HEK293T (cell line): ENCODE measurements at regions of chr19 and their contacts with region 1.

Region 1: GRCh38 chr19:14136509-14137281 is at the start of gene ASF1B:
- DNase-seq: peak; percentile 92

Region 2: GRCh38 chr19:14061756-14062562 is 74.7 kb before region 1 on chr19 and contains the start of gene PALM3:
- CTCF ChIA-PET with region 1: no interaction called
- POLR2A ChIA-PET with region 1: no interaction called
- DNase-seq: no peak

Region 3: GRCh38 chr19:14073261-14073924 is 63.3 kb before region 1 on chr19:
- CTCF ChIA-PET with region 1: interaction called, 3 read pairs
- POLR2A ChIA-PET with region 1: interaction called, 15 read pairs
- DNase-seq: peak; percentile 79

Region 4: DNA sequence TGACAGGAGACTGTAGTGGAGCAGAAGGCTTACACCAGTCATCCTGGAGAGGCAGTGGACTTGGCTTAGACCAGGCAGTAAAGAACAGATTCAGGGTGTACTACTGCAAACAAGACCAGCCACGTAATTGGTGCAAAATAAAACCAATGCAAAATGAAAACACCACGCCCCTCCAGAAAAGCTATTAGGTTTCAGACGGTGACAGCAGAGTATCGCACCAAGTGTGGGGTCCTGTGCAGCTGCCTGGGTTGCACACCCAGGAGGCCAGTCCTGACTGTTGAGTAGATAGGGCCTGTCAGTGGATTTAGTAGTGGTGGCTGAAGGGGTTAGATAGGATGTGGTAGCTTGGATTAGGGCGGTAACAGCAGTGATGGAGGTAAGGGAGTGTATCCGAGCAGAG is 13.8 kb before region 1 on chr19:
- CTCF ChIA-PET with region 1: interaction called, 5 read pairs
- POLR2A ChIA-PET with region 1: interaction called, 13 read pairs
- DNase-seq: no peak

Region 5: GRCh38 chr19:14147797-14148605 is 11.3 kb after region 1 on chr19:
- CTCF ChIA-PET with region 1: interaction called, 10 read pairs
- POLR2A ChIA-PET with region 1: interaction called, 18 read pairs
- DNase-seq: peak; percentile 74

Region 6: GRCh38 chr19:14347999-14348889 is 211.5 kb after region 1 on chr19:
- CTCF ChIA-PET with region 1: interaction called, 7 read pairs
- POLR2A ChIA-PET with region 1: interaction called, 11 read pairs
- DNase-seq: peak; percentile 85